Activated naive CD4-positive, alpha-beta T cell treated with anti-CD3 and anti-CD28 coated beads for 36 hours (primary cell): ENCODE measurements at regions of chr6 and their contacts with region 1.

Region 1: GRCh38 chr6:159017757-159018559 is 18.0 kb upstream of the RSPH3 start:
- DNase-seq: no peak
- H3K4me3 Mint-ChIP-seq: no peak overlapping the region
- H3K27ac Mint-ChIP-seq: peak overlapping the region; percentile 68
- H3K4me1 Mint-ChIP-seq: peaks cover 47% of the 10 kb centered on the region
- H3K27me3 Mint-ChIP-seq: no peaks in the 10 kb centered on the region

Region 2: DNA sequence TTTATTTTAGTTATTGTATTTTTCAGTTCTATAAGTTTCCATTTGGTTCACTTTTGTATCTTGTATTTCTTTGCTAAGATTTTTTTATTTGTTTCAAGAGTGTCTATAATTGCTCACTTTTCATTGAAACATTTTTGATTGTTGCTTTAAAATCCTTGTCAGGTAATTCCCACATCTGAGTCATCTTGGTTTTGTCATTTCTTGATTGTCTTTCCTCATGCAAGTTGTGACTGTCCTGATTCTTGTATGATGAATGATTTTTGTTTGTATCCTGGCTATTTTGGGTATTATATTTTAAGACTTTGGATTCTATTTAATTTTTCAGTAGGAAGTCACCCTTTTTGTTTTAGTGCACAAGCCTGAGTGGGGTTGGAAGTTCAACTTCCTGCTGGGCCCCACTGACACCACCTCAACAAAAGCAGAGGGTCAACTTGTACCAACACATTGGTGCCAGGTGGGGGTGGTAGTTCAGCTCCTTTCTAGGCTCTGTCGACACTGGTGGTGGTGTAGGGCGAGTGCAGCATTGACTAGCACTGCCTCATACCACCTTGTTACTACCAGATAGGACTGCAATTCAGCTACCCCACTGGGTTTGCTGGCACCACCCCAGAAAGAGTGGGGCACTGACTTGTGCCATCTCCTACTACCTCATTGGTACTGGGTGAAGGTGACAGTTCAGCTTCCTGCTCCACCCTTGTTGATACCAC is 26.8 kb before region 1 on chr6:
- CTCF ChIA-PET with region 1: interaction called, 5 read pairs
- intact Hi-C with region 1: loop called (anchors 1 kb)
- DNase-seq: peak; percentile 56
- H3K4me3 Mint-ChIP-seq: no peak overlapping the region
- H3K27ac Mint-ChIP-seq: peak overlapping the region; percentile 60
- H3K4me1 Mint-ChIP-seq: peaks cover 48% of the 10 kb centered on the region
- H3K27me3 Mint-ChIP-seq: no peaks in the 10 kb centered on the region

Region 3: DNA sequence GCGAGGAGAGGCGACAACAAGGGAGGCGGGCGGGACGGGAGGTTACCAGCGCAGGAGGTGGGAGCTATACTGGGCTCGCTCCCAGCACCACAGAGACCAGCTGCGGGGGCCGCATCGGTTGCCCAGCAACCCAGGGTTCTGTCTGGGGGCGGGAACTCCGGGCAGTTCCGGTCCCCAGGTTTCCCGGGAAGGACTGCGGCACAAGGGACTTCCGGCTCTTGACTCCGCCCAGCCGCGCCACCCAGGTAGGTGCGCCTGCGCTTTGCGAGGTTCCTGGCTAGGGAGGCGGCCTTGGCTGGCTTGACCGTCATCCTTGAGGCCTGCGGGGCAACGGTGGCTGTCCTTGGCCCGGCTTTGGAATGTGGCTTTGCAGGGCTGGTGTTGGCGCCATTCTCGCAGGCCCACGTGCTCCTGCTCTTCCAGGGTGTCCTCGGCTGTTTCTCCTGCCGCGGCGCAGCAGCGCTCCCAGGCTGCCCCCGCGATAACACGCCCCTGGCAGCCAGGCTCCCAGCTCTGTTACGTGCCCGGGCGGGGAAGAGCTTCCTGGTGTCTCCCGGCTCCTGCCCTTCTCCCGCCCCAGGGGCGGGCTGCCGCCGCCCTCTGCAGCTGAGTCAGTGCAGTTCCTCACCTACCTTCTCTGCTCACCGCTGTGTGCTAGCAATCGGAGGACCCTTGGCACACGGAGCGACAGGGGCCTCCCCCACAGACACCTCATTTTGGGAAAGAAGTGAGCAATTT is 18.1 kb before region 1 on chr6 and contains the start of gene RSPH3:
- CTCF ChIA-PET with region 1: interaction called, 5 read pairs
- intact Hi-C with region 1: loop called (anchors 1 kb)
- DNase-seq: peak; percentile 94
- H3K4me3 Mint-ChIP-seq: peak within 1 kb of the TSS; percentile 98
- H3K27ac Mint-ChIP-seq: peak within 1 kb of the TSS; percentile 82
- H3K4me1 Mint-ChIP-seq: peaks cover 45% of the 10 kb centered on the region
- H3K27me3 Mint-ChIP-seq: no peaks in the 10 kb centered on the region
- total RNA-seq, gene RSPH3: 3.0 to 3.2 TPM

Region 4: DNA sequence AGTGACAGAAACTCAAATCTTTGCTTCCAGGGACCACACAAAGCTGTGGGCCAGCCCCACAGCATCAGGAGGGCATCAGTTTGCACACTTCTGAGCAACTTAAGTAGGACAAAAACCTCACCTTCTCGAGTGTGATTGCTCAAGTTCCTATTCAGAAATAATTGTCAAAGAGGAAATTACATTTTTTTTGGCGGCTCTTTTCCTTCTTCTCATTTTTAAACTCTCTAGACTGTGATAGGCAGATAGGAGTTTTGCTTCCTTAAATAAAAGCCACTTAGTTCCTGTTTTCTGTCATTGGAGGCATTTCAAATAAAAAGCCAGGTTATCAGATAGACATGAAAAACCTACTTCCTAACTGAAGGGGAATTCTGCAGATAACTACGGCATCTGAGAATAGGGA is 38.0 kb after region 1 on chr6:
- CTCF ChIA-PET with region 1: no interaction called
- intact Hi-C with region 1: loop called (anchors 1 kb)
- DNase-seq: peak; percentile 41
- H3K4me3 Mint-ChIP-seq: peak overlapping the region; percentile 22
- H3K27ac Mint-ChIP-seq: peak overlapping the region; percentile 91
- H3K4me1 Mint-ChIP-seq: peaks cover 60% of the 10 kb centered on the region
- H3K27me3 Mint-ChIP-seq: no peaks in the 10 kb centered on the region